PC-9 (cell line): ENCODE measurements at regions of chr12 and their contacts with region 1.

Region 1: GRCh38 chr12:20681334-20681733 is 13.8 kb upstream of the SLCO1C1 start:
- DNase-seq: no peak
- H3K4me3 ChIP-seq: no peak overlapping the region
- H3K27ac ChIP-seq: no peak overlapping the region
- H3K4me1 ChIP-seq: no peaks in the 10 kb centered on the region
- H3K27me3 ChIP-seq: no peaks in the 10 kb centered on the region
- CTCF ChIP-seq: no peak

Region 2: DNA sequence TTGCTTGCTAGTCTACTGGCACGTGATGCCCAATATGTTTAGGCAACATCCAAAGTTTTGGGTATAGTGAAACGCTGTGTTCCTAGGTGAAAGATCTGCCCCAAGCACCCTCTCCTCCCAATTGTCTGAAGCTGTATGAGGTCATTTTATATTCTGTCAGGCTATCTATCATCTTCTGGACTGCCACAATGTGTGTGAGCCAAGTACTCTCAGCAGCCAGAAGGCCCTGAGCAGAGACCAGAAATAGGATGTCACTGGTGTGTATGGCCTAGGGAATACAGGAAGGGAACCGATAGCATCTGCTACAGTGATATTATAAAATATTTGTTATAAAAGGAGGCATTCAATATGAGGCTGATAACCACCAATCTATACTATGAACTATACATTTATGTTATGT is 320.9 kb before region 1 on chr12:
- CTCF ChIA-PET with region 1: interaction called, 15 read pairs
- POLR2A ChIA-PET with region 1: no interaction called
- intact Hi-C with region 1: no loop called
- DNase-seq: no peak
- H3K4me3 ChIP-seq: no peak overlapping the region
- H3K27ac ChIP-seq: no peak overlapping the region
- H3K4me1 ChIP-seq: no peaks in the 10 kb centered on the region
- H3K27me3 ChIP-seq: no peaks in the 10 kb centered on the region
- CTCF ChIP-seq: no peak

Region 3: DNA sequence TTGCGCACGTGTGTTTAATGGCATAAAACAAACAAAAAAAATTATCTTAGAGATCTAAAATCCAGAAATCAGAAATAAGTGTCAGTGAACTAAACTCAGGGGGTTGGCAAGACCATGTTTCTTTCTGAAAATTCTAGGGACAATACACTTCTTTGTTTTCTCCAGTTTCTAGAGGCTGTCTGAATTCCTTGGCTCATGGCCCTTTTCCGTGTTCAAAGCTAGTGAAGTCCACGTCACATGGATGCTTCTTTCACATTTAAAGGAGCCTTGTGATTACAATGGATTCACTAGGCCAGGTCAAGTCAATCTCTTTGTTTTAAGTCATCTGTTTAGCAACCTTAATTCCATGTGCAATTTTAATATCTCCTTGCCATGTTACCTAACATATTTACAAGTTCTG is 151.6 kb after region 1 on chr12:
- CTCF ChIA-PET with region 1: no interaction called
- POLR2A ChIA-PET with region 1: no interaction called
- intact Hi-C with region 1: no loop called
- DNase-seq: no peak
- H3K4me3 ChIP-seq: no peak overlapping the region
- H3K27ac ChIP-seq: no peak overlapping the region
- H3K4me1 ChIP-seq: peaks cover 11% of the 10 kb centered on the region
- H3K27me3 ChIP-seq: no peaks in the 10 kb centered on the region
- CTCF ChIP-seq: no peak

Region 4: GRCh38 chr12:20950248-20950647 is 268.9 kb after region 1 on chr12:
- CTCF ChIA-PET with region 1: no interaction called
- POLR2A ChIA-PET with region 1: no interaction called
- intact Hi-C with region 1: no loop called
- DNase-seq: no peak
- H3K4me3 ChIP-seq: no peak overlapping the region
- H3K27ac ChIP-seq: no peak overlapping the region
- H3K4me1 ChIP-seq: no peaks in the 10 kb centered on the region
- H3K27me3 ChIP-seq: no peaks in the 10 kb centered on the region
- CTCF ChIP-seq: peak; percentile 74